ENCODE measurements at regions of chr2 and their contacts with region 1.

Region 1: DNA sequence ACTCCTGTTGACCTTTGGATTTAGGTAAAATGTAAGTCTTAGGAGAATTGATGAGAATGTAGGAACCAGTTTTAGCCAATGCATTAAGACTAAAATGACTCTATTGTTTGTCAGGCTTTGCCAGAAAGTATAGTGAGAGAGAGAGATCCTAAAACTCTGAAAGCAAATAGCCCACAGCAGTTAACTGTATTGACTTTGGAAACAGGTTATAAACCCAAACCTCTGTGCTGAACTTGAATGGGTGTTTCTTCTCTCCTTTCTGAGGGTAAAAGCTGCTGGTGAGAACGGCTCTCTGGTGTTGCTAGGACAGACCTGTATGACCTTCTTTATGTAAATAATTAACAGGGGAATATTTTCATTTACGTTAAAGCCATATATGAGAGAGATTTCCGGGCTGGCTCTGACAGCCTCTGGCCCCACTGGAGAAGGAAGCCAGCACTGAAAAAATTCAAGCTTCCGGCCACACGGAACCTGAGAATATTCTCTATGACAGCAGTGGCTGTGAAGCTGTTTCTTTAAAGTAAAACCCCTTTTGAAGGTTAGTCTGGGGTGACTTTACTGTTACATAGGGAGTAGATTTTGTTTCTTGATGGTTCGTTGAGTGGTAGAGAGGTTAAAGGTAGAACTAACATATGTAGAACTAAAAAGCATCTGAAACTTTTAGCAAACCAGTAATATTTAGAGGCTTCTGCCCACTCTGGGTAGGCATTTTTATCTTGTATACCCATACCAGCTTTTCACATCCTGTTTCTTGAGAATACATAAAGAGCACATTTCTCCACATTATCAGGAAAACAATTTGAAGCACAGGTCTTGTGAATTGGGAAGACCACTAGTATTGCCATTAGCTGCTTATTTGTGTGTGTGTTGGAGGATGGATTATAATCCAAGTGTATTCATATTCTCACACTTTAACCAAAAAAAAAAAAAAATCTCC is 123.8 kb downstream of the SPTBN1 start:
- DNase-seq: peak in 4 of 5 donors; percentile 58 to 78 (median 70)
- H3K4me3 ChIP-seq: peak overlapping the region in 1 of 2 donors; percentile 16
- H3K4me3 Mint-ChIP-seq: peak overlapping the region; percentile 59 to 86 (median 80)
- H3K27ac ChIP-seq: peak overlapping the region; percentile 94
- H3K27ac Mint-ChIP-seq: peak overlapping the region; percentile 93 to 99 (median 98)
- H3K4me1 ChIP-seq: peaks cover 100% of the 10 kb centered on the region
- H3K4me1 Mint-ChIP-seq: peaks cover 77 to 99% (median 90%) of the 10 kb centered on the region in 4 donors
- H3K27me3 ChIP-seq: no peaks in the 10 kb centered on the region
- H3K27me3 Mint-ChIP-seq: no peaks in the 10 kb centered on the region

Region 2: GRCh38 chr2:54271843-54272627 is 307.9 kb before region 1 on chr2:
- CTCF ChIA-PET with region 1: no interaction called
- POLR2A ChIA-PET with region 1: no interaction called
- intact Hi-C with region 1: no loop called
- DNase-seq: no peak
- H3K4me3 ChIP-seq: no peak overlapping the region
- H3K4me3 Mint-ChIP-seq: no peak overlapping the region
- H3K27ac ChIP-seq: no peak overlapping the region
- H3K27ac Mint-ChIP-seq: no peak overlapping the region
- H3K4me1 ChIP-seq: no peaks in the 10 kb centered on the region
- H3K4me1 Mint-ChIP-seq: peaks cover 0 to 5% (median 0%) of the 10 kb centered on the region in 4 donors
- H3K27me3 ChIP-seq: no peaks in the 10 kb centered on the region
- H3K27me3 Mint-ChIP-seq: no peaks in the 10 kb centered on the region

Region 3: DNA sequence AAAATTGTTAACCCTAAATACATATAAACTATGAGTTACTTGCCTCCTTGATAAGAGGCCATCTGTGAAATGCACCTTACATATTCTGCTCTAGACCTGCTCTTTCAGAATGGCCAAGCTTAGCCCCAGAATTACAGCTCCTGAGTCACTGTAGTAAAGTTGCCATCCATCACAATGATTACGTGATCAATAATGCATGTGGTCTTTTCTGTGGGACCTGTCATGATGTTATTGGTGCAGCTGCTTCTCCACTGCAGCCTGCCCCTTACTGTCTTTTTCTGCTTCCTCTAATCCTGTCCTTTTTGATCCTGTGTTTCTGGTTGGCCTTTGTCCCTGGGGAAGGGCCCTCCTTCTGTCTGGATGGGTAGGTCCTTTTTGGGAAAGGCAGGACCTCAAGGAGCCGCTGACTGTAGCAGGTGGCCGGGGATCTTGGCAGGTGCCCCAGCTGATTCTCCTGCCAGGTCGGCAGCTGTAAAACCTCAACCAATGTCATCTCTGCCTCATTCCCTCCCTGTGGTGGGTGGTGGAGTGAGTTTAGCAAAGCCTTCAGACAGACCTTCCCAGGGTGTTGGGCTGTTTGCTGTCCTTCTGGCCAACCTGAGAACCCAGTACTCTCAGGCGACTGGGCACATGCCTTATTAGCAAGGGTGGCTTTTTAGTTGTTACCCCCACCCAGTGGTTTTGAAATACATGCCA is 17.3 kb after region 1 on chr2:
- CTCF ChIA-PET with region 1: interaction called, 26 read pairs
- POLR2A ChIA-PET with region 1: interaction called, 136 read pairs
- intact Hi-C with region 1: loop called (anchors 2 kb)
- DNase-seq: peak in 1 of 5 donors; percentile 32
- H3K4me3 ChIP-seq: peak overlapping the region in 1 of 2 donors; percentile 18
- H3K4me3 Mint-ChIP-seq: peak overlapping the region; percentile 52 to 90 (median 86)
- H3K27ac ChIP-seq: peak overlapping the region; percentile 48
- H3K27ac Mint-ChIP-seq: peak overlapping the region; percentile 92 to 98 (median 97)
- H3K4me1 ChIP-seq: peaks cover 89% of the 10 kb centered on the region
- H3K4me1 Mint-ChIP-seq: peaks cover 64 to 87% (median 83%) of the 10 kb centered on the region in 4 donors
- H3K27me3 ChIP-seq: no peaks in the 10 kb centered on the region
- H3K27me3 Mint-ChIP-seq: no peaks in the 10 kb centered on the region

Measured in CD4-positive, alpha-beta memory T cell (primary cell).